GM12878 (cell line): ENCODE measurements at regions of chr14 and their contacts with region 1.

Region 1: DNA sequence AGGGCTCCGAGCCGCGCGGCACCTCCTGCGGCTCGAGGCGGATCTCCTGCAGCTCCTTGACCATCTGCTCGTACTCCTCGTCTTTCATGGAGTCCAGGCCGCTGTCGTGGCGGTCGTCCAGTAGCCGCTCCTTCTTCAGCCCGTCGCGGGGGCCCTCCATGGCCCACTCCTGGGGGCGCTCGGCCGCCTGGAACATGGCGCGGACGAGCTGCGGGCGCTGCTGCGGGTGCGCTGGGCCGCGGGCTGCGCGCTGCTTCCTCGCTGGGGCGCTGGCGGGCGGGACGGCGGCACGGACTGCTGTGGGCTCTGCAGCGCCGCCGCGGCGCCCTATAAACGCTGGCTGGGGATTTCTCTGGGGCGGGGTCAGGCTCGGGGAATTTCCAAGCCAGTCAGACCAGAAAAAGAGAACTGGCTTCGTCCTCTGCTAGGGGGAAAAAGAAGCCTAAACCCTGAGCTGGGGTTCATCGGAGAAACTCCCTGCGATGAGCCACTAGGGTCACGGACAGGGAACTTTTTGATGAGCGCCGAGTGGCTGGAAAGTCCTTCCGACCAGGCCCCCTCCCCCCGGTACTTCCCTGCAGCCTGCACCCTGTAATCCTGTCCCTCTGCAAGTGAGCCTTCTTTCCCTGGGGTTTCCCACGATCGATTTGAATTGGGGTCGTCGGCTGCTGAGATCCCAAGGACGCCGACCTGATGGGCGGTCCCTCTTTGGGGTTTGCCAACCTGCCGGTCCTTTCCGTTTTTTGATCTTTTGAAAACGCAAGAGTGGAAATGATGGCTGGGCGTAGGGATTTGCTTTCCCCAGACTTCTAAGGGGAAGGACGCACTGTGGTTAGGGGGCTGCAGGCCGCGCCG is at the start of gene NFKBIA:
- DNase-seq: peak; percentile 86
- ATAC-seq: peak; percentile 63
- H3K4me3 ChIP-seq: peak within 1 kb of the TSS; percentile 98
- H3K27ac ChIP-seq: peak within 1 kb of the TSS; percentile 89
- H3K4me1 ChIP-seq: peaks cover 14% of the 10 kb centered on the region
- H3K27me3 ChIP-seq: no peaks in the 10 kb centered on the region
- CTCF ChIP-seq: peak; percentile 35 to 39 (median 39); a peak in 3 of 6 replicates
- EP300 ChIP-seq: peak; percentile 78 to 83; a peak in 2 of 4 replicates
- POLR2A ChIP-seq: peak; percentile 95
- RAD21 ChIP-seq: peak; percentile 25; the same call in 1 of the 2 replicates
- polyA plus RNA-seq, gene NFKBIA: 123 to 159 TPM

Region 2: GRCh38 chr14:34833549-34834523 is 570.8 kb before region 1 on chr14:
- CTCF ChIA-PET with region 1: no interaction called
- POLR2A ChIA-PET with region 1: no interaction called
- RAD21 ChIA-PET with region 1: no interaction called
- SMC1A ChIA-PET with region 1: no interaction called
- in situ Hi-C with region 1: no loop called
- intact Hi-C with region 1: no loop called
- DNase-seq: no peak
- ATAC-seq: peak; percentile 54
- H3K4me3 ChIP-seq: no peak overlapping the region
- H3K27ac ChIP-seq: no peak overlapping the region
- H3K4me1 ChIP-seq: no peaks in the 10 kb centered on the region
- H3K27me3 ChIP-seq: no peaks in the 10 kb centered on the region
- CTCF ChIP-seq: no peak
- EP300 ChIP-seq: no peak
- POLR2A ChIP-seq: no peak
- RAD21 ChIP-seq: no peak

Region 3: DNA sequence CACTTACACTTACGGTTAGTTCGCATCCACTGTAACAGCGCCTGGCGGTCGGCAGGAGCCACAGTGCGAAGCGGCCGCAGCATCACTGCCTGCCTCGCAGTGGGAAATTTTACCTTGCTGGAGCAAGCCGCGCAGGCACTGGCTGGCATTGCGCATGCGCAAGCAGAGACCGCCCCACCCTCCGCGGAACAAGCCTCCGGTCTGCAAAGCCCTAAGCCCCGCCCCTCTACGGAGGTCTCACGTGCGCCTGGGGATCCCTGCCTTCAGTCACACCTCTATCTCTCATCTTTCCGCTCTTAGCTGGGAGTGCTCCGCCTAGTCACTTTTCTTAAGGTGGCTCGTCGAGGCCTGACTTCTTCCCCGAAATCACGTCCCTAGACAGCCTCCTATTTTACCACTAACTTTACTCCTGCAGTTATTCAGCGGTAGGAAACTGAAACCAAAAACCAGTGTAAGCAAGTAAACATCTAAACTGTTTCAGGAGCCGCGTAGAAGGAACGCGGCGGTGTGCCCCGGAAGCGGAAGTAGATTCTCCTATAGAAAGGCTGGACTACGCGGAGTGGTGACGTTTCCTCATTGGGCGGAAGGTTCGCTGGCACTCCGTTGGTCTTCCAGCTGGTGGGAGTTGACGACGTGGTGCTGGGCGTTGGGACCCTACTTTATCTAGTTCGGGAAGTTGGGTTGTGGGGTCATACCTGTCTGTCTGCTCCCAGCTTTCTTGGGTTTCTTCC is 422.1 kb before region 1 on chr14 and contains the start of gene SRP54:
- CTCF ChIA-PET with region 1: interaction called, 4 read pairs
- POLR2A ChIA-PET with region 1: interaction called, 3 read pairs
- RAD21 ChIA-PET with region 1: no interaction called
- SMC1A ChIA-PET with region 1: interaction called, 4 read pairs
- in situ Hi-C with region 1: no loop called
- intact Hi-C with region 1: loop called (anchors 5 kb)
- DNase-seq: peak; percentile 95
- ATAC-seq: peak; percentile 88
- H3K4me3 ChIP-seq: peak within 1 kb of the TSS; percentile 89
- H3K27ac ChIP-seq: peak within 1 kb of the TSS; percentile 95
- H3K4me1 ChIP-seq: no peaks in the 10 kb centered on the region
- H3K27me3 ChIP-seq: no peaks in the 10 kb centered on the region
- CTCF ChIP-seq: peak; percentile 11 to 20 (median 15); a peak in 2 of 6 replicates
- EP300 ChIP-seq: peak in 1 of 2 experiments; percentile 44; a peak in 2 of 4 replicates
- POLR2A ChIP-seq: peak; percentile 87
- RAD21 ChIP-seq: no peak
- polyA plus RNA-seq, gene SRP54: 71.3 to 73.3 TPM

Region 4: GRCh38 chr14:35159742-35160409 is 244.8 kb before region 1 on chr14:
- CTCF ChIA-PET with region 1: interaction called, 4 read pairs
- POLR2A ChIA-PET with region 1: interaction called, 10 read pairs
- RAD21 ChIA-PET with region 1: interaction called, 6 read pairs
- SMC1A ChIA-PET with region 1: interaction called, 11 read pairs
- in situ Hi-C with region 1: no loop called
- intact Hi-C with region 1: no loop called
- DNase-seq: no peak
- ATAC-seq: peak; percentile 64
- H3K4me3 ChIP-seq: no peak overlapping the region
- H3K27ac ChIP-seq: peak overlapping the region; percentile 45; the same call in 1 of the 2 replicates
- H3K4me1 ChIP-seq: peaks cover 19% of the 10 kb centered on the region
- H3K27me3 ChIP-seq: no peaks in the 10 kb centered on the region
- CTCF ChIP-seq: no peak
- EP300 ChIP-seq: peak in 1 of 2 experiments; percentile 14; a peak in 1 of 4 replicates
- POLR2A ChIP-seq: no peak
- RAD21 ChIP-seq: no peak

Region 5: GRCh38 chr14:35261774-35262173 is 142.9 kb before region 1 on chr14:
- CTCF ChIA-PET with region 1: interaction called, 6 read pairs
- POLR2A ChIA-PET with region 1: no interaction called
- RAD21 ChIA-PET with region 1: interaction called, 14 read pairs
- SMC1A ChIA-PET with region 1: interaction called, 16 read pairs
- in situ Hi-C with region 1: no loop called
- intact Hi-C with region 1: no loop called
- DNase-seq: no peak
- ATAC-seq: peak; percentile 36; the same call in 2 of the 3 replicates
- H3K4me3 ChIP-seq: no peak overlapping the region
- H3K27ac ChIP-seq: no peak overlapping the region
- H3K4me1 ChIP-seq: no peaks in the 10 kb centered on the region
- H3K27me3 ChIP-seq: no peaks in the 10 kb centered on the region
- CTCF ChIP-seq: peak in 1 of 3 experiments; percentile 30; a peak in 1 of 6 replicates
- EP300 ChIP-seq: no peak
- POLR2A ChIP-seq: no peak
- RAD21 ChIP-seq: peak; percentile 50

Region 6: DNA sequence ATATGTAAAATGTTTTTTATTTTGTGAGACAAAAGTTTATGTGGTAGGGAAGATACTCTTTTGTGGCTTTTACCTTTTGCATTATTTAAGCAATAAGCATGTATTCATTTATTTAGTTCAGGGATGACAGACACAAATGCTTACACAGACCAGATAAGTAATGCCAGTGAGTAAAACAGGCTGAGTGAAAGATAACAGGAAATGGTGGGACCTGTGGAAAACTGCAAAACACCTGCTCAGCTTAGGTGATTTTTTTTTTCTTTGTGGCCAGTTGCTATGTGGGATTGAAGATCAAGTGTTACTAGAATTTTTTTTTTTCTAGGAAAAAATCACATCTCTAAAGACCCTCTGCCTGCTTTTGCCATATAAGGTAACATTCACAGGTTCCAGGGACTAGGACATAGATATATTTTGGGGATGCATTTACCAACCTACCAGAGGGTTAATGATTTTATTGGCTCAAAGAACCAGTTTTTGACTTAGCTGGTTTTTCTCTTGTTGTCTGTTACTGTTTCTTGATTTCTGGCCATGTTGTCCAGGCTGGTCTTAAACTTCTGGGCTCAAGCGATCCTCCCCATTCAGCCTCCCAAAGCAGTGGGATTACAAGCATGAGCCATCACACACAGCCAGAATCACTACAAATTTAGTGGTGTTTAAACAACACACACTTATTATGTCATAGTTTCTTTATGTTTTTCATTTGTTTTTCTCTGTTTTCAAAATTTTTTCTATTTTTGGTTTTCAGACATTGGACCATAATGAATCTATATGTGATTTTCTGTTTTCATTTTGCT is 102.7 kb before region 1 on chr14:
- CTCF ChIA-PET with region 1: interaction called, 12 read pairs
- POLR2A ChIA-PET with region 1: interaction called, 9 read pairs
- RAD21 ChIA-PET with region 1: interaction called, 10 read pairs
- SMC1A ChIA-PET with region 1: interaction called, 12 read pairs
- in situ Hi-C with region 1: no loop called
- intact Hi-C with region 1: no loop called
- DNase-seq: no peak
- ATAC-seq: peak; percentile 30
- H3K4me3 ChIP-seq: no peak overlapping the region; the same call in 1 of the 2 replicates
- H3K27ac ChIP-seq: peak overlapping the region; percentile 13; the same call in 1 of the 2 replicates
- H3K4me1 ChIP-seq: peaks cover 30% of the 10 kb centered on the region
- H3K27me3 ChIP-seq: no peaks in the 10 kb centered on the region
- CTCF ChIP-seq: no peak
- EP300 ChIP-seq: no peak
- POLR2A ChIP-seq: no peak
- RAD21 ChIP-seq: no peak

Region 7: GRCh38 chr14:35565871-35566464 is 161.3 kb after region 1 on chr14:
- CTCF ChIA-PET with region 1: no interaction called
- POLR2A ChIA-PET with region 1: no interaction called
- RAD21 ChIA-PET with region 1: no interaction called
- SMC1A ChIA-PET with region 1: no interaction called
- in situ Hi-C with region 1: no loop called
- intact Hi-C with region 1: no loop called
- DNase-seq: no peak
- ATAC-seq: no peak
- H3K4me3 ChIP-seq: no peak overlapping the region
- H3K27ac ChIP-seq: no peak overlapping the region
- H3K4me1 ChIP-seq: no peaks in the 10 kb centered on the region
- H3K27me3 ChIP-seq: no peaks in the 10 kb centered on the region
- CTCF ChIP-seq: no peak
- EP300 ChIP-seq: no peak
- POLR2A ChIP-seq: no peak
- RAD21 ChIP-seq: no peak